ENCODE measurements at regions of chr5 and their contacts with region 1.

Region 1: GRCh38 chr5:142324871-142325724 is at the start of gene SPRY4:
- DNase-seq: peak; percentile 100
- H3K4me3 Mint-ChIP-seq: peak within 1 kb of the TSS; percentile 76
- H3K27ac Mint-ChIP-seq: peak within 1 kb of the TSS; percentile 77
- H3K4me1 Mint-ChIP-seq: peaks cover 55% of the 10 kb centered on the region
- H3K27me3 Mint-ChIP-seq: no peaks in the 10 kb centered on the region
- CTCF ChIP-seq: peak; percentile 6
- total RNA-seq, gene SPRY4: 34.5 and 41.9 TPM in 2 replicates

Region 2: GRCh38 chr5:142167458-142167857 is 157.6 kb before region 1 on chr5:
- CTCF ChIA-PET with region 1: no interaction called
- POLR2A ChIA-PET with region 1: interaction called, 3 read pairs
- intact Hi-C with region 1: loop called (anchors 5 kb)
- DNase-seq: peak; percentile 24
- H3K4me3 Mint-ChIP-seq: no peak overlapping the region
- H3K27ac Mint-ChIP-seq: no peak overlapping the region
- H3K4me1 Mint-ChIP-seq: peaks cover 8% of the 10 kb centered on the region
- H3K27me3 Mint-ChIP-seq: no peaks in the 10 kb centered on the region
- CTCF ChIP-seq: peak; percentile 32

Region 3: DNA sequence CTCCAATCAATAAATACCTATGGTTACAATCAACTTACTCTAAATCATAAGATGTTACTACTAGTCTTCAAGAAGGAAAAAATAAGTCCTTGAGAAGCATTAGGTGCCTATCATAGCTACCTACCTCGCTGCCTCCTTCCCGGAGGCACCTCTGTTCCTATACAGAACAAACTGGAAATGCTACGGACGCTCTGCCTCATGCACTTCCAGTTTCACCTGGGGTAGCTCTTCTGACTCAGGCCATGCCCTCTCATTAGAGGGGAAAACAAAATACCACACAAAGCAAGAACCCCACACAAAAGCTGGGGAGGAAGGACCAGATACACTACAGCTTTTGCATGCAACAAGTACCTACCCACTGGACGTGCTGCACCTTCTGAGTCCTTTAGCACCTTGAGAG is 12.7 kb before region 1 on chr5:
- CTCF ChIA-PET with region 1: interaction called, 5 read pairs
- POLR2A ChIA-PET with region 1: interaction called, 15 read pairs
- intact Hi-C with region 1: no loop called
- DNase-seq: no peak
- H3K4me3 Mint-ChIP-seq: no peak overlapping the region
- H3K27ac Mint-ChIP-seq: peak overlapping the region; percentile 40
- H3K4me1 Mint-ChIP-seq: peaks cover 8% of the 10 kb centered on the region
- H3K27me3 Mint-ChIP-seq: no peaks in the 10 kb centered on the region
- CTCF ChIP-seq: no peak

Region 4: DNA sequence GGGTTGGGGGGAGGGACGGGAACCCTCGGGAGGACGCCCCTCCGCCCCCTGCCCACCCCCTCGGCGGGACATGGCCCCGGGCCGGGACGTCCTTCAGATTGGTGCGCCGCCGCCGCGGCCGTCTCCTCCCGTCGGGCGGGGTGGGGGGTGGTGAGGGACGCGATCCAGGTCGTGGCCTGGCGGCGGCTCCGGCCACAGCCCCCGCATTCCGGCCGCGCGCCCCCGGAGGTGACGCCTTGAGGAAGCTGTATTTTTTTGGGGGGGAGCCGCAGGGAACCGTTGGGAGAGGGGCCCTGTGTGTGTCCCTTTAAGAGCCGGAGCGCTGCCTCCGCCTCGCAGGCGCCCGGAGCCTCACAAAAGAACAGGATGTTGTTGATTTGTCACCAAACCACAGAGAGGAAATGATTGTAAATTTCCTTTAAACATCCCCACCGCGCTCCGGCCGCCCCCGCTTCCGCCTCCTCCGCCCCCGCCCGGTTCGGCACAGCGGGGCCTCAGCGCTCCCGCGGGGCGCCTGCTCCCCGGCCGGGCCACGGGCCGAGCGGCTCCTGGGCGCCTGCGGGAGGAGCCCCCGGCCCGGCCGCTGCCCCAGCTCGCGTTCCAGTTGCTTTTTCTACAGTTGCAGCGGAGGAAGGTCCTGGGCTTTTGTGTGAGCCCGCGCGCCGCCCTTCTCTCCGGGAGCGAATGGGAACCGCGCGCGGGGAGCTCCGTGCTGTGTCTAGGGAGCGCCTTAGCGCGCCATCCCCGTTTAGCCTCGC is 31.8 kb after region 1 on chr5:
- CTCF ChIA-PET with region 1: interaction called, 22 read pairs
- POLR2A ChIA-PET with region 1: interaction called, 150 read pairs
- intact Hi-C with region 1: loop called (anchors 1 kb)
- DNase-seq: peak; percentile 95
- H3K4me3 Mint-ChIP-seq: peak overlapping the region; percentile 82
- H3K27ac Mint-ChIP-seq: peak overlapping the region; percentile 86
- H3K4me1 Mint-ChIP-seq: peaks cover 6% of the 10 kb centered on the region
- H3K27me3 Mint-ChIP-seq: no peaks in the 10 kb centered on the region
- CTCF ChIP-seq: no peak

Region 5: DNA sequence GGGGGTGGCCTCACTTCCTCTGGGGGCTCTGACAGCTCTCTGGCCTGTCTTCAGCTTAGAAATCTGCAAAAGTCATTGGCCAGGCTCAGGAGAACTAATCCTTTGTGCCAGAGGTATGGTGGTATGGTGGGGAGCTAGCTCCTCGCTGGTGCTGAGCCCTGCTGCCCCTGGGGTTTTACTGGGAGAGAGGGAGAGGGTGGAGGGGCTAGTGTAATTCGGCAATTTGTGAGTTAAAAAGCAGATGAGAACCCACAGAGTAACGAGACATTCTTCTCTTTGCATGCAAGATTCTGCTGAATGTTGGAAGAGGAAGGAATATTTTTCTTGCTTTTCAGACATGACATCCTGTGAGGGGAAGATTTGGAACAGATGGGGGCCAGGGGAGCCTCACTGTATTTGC is 65.2 kb after region 1 on chr5:
- CTCF ChIA-PET with region 1: no interaction called
- POLR2A ChIA-PET with region 1: no interaction called
- intact Hi-C with region 1: no loop called
- DNase-seq: no peak
- H3K4me3 Mint-ChIP-seq: no peak overlapping the region
- H3K27ac Mint-ChIP-seq: no peak overlapping the region
- H3K4me1 Mint-ChIP-seq: peaks cover 15% of the 10 kb centered on the region
- H3K27me3 Mint-ChIP-seq: no peaks in the 10 kb centered on the region
- CTCF ChIP-seq: no peak

Region 6: DNA sequence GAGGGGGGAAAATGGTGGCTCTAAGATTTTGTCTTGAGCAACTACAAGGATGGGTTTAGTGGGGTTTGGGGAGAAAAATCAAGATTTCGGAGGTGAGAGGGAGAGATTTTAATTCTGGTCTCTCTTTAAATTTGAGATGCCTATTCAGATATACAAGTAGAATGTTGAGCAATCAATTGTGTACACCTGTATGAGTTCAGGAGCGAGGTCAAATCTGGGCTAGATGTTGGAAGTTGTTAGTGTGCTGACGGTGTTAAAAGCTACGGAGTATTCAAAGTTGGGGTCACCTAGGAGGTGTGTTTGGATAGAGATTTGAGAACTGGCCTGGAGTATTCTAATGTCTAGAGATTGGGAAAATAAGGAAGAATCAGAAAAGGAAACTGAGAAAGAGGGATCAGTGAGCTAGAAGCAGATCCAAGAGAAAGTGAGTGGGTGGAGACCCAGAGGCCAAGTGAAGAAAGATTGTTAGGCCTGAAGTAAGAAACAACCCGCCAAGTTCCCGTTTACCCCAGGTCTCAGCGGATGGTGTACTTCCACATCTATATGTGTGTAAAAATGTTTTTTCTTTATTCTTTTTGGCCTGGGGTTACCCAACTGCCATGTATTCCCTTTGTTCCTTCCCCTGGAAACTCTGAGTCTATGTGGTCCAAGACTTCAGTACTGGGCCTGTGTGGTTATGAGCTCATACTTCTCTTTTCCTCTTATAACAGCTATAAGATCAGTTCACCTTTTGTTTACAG is 433.1 kb after region 1 on chr5:
- CTCF ChIA-PET with region 1: no interaction called
- POLR2A ChIA-PET with region 1: no interaction called
- intact Hi-C with region 1: no loop called
- DNase-seq: no peak
- H3K4me3 Mint-ChIP-seq: no peak overlapping the region
- H3K27ac Mint-ChIP-seq: no peak overlapping the region
- H3K4me1 Mint-ChIP-seq: peaks cover 9% of the 10 kb centered on the region
- H3K27me3 Mint-ChIP-seq: no peaks in the 10 kb centered on the region
- CTCF ChIP-seq: no peak

Region 7: GRCh38 chr5:143290125-143290524 is 965.0 kb after region 1 on chr5:
- CTCF ChIA-PET with region 1: no interaction called
- POLR2A ChIA-PET with region 1: no interaction called
- intact Hi-C with region 1: no loop called
- DNase-seq: no peak
- H3K4me3 Mint-ChIP-seq: no peak overlapping the region
- H3K27ac Mint-ChIP-seq: no peak overlapping the region
- H3K4me1 Mint-ChIP-seq: no peaks in the 10 kb centered on the region
- H3K27me3 Mint-ChIP-seq: no peaks in the 10 kb centered on the region
- CTCF ChIP-seq: no peak